HAP-1 (cell line): ENCODE measurements at regions of chr1 and their contacts with region 1.

Region 1: DNA sequence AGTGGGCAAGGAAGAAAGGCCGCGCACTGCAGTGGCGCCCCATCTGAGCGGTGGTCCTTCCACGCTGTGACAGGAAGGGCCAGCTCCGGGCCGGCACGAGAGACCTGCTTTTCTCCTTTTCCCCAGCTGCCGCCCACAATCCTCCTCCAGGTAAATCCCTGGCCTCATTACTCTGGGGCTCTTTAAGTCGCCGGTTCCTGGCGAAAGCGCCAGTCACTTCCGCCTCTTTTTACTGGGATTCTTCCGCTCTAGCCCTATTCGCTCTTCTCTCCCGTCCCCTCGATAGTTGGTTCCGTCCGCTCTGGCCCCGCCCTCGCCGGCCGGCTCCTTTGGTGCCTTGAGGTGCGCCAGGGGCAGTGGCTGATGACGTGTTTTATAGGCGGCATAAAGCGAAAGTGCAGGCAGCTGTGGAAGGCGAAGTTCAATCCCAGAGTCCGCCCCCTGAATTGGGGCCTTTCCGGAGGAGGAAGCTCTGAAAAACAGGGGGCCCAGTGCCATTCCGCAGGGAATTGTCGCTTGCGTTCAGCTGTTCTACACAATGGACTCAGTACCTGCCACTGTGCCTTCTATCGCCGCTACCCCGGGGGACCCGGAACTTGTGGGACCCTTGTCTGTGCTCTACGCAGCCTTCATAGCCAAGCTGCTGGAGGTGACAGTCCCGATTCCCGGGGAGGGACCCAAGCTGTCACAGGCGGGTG is 26.2 kb downstream of the MIA3 start:
- DNase-seq: peak; percentile 94 to 98
- H3K4me3 ChIP-seq: peak overlapping the region; percentile 85
- H3K4me1 ChIP-seq: peaks cover 5% of the 10 kb centered on the region; the same call in 1 of the 2 replicates
- H3K27me3 ChIP-seq: no peaks in the 10 kb centered on the region

Region 2: GRCh38 chr1:222713091-222713961 is 69.2 kb after region 1 on chr1:
- in situ Hi-C with region 1: loop called (anchors 10 kb)
- DNase-seq: peak; percentile 92 to 95
- H3K4me3 ChIP-seq: peak overlapping the region; percentile 85
- H3K4me1 ChIP-seq: peaks cover 13% of the 10 kb centered on the region
- H3K27me3 ChIP-seq: no peaks in the 10 kb centered on the region

Region 3: DNA sequence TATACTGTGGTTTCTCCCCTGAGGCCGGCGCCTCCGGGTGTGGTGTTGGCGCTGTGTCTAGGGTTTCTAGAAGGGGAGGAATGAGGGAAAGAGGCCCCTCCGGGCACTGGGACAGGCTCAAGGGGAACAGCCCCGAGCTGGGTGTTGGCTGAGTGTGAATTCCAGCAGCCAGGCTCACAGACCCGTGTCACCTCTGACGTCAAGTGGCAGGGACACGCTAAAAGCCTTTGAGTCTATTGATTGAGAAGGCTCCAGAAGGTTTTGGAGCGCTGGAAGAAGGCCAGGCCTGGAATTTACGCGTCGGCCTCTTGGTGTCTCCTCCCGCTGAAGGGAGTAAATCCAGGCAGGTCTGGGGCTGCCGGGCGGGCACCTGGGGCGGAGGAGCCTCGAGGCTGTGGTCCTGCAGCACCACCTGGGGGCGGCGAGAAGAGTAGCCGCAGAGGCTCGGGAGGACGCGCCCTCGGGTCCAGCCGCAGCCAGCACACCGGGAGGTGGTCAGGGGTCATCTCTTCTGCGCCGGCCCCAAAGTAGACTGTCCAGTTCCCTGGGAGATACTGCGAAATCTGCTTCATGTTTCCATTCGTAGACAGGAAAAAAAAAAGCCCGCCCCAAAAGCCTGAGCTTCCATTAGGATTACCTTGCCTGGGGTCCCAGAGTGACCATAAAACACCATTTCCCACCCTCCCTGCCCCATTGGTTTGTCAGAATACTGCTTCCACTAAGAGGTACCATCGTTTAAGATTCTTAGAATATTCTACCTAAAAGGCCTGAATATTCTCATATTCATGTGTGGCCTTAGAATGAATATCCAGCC is 437.3 kb after region 1 on chr1:
- in situ Hi-C with region 1: loop called (anchors 25 kb)
- DNase-seq: peak; percentile 86 to 93
- H3K4me3 ChIP-seq: no peak overlapping the region
- H3K4me1 ChIP-seq: peaks cover 2% of the 10 kb centered on the region; the same call in 1 of the 2 replicates
- H3K27me3 ChIP-seq: no peaks in the 10 kb centered on the region